K562 (cell line): ENCODE measurements at regions of chr1 and their contacts with region 1.

Region 1: DNA sequence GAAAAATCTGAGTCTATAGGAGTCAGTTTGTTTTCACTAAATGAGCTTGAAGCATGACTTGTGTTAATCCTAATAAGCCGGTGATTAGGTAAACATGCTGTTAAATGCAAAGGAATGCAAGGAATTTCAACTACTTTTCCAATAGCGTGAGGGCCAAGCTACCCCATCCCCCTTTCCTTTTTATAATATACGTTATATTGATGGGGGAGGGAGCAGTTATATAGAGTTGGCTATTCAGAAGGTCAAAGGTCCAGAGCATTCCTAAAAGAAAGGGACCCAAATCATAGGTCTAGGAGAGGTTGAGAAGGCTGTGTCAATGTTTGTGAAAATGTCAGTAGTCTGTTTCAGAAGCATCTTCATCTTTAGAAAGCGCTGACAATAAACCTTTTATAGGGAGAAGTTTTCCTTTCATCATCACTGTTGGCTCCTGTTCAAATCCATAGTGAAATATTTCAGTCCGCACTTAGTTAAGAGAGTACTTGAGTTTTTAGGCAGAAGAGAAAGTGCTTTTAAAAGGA is 3.8 kb downstream of the CCN1 start:
- DNase-seq: no peak
- ATAC-seq: no peak
- H3K4me3 ChIP-seq: no peak overlapping the region
- H3K27ac ChIP-seq: no peak overlapping the region
- H3K4me1 ChIP-seq: peaks cover 0 to 15% of the 10 kb centered on the region in 2 experiments; a peak in 3 of 5 replicates
- H3K27me3 ChIP-seq: no peaks in the 10 kb centered on the region
- CTCF ChIP-seq: no peak
- EP300 ChIP-seq: no peak
- POLR2A ChIP-seq: no peak
- RAD21 ChIP-seq: no peak

Region 2: DNA sequence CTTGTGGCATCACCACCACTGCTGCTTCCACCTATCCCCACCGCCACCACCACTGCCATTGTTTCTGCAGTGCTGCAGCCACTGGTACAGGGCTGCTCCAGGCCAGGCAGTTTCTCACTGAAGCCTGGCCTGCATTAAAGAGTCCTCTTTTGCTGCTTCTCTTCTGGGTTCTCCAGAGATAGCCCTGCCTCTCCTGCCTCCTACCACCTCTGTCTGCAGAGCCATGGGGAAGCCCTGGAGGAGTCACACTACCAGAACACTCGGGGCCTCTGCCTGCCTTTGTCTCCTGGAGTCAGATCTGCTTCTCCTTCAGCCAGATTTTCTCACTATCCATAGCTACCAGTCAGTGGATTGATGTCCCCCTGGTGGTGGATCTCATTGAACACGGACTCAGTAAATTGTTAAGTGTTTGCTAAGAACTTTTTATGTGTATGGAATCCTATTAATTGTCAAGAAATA is 81.7 kb before region 1 on chr1:
- CTCF ChIA-PET with region 1: no interaction called
- POLR2A ChIA-PET with region 1: no interaction called
- in situ Hi-C with region 1: no loop called
- intact Hi-C with region 1: no loop called
- DNase-seq: peak in 3 of 4 experiments; percentile 10 to 23 (median 13)
- ATAC-seq: peak; percentile 69
- H3K4me3 ChIP-seq: no peak overlapping the region
- H3K27ac ChIP-seq: no peak overlapping the region
- H3K4me1 ChIP-seq: no peaks in the 10 kb centered on the region
- H3K27me3 ChIP-seq: no peaks in the 10 kb centered on the region
- CTCF ChIP-seq: 0 out of 6 replicates have a peak, but pooled peaks have one; percentile 21 to 33 (median 30)
- EP300 ChIP-seq: no peak
- POLR2A ChIP-seq: no peak
- RAD21 ChIP-seq: no peak

Region 3: DNA sequence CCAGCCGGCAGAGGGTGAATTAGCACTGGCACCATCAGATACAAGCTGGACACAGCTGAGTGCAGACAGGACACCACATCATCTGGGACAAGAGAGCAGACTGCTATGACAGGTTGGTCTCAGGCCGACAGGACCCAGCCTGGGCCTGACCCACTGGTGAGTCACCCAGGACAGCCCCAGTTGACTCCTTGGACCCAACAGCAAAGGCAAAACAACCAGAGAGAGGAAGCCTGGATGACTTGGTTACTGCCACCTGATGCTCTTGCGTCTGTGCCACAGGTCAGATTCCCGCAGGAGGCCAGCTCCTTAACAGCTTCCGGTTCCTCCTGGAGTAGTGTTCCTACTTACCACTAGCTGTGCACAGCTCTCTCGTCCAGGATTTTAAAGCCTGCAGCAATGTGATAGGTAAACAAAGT is 14.8 kb after region 1 on chr1:
- CTCF ChIA-PET with region 1: no interaction called
- POLR2A ChIA-PET with region 1: interaction called, 16 read pairs
- in situ Hi-C with region 1: no loop called
- intact Hi-C with region 1: no loop called
- DNase-seq: no peak
- ATAC-seq: no peak
- H3K4me3 ChIP-seq: no peak overlapping the region
- H3K27ac ChIP-seq: no peak overlapping the region
- H3K4me1 ChIP-seq: no peaks in the 10 kb centered on the region
- H3K27me3 ChIP-seq: peaks cover 0 to 6% of the 10 kb centered on the region in 2 experiments; a peak in 2 of 5 replicates
- CTCF ChIP-seq: no peak
- EP300 ChIP-seq: no peak
- POLR2A ChIP-seq: no peak
- RAD21 ChIP-seq: no peak